Sciatic nerve (tissue), 2 donors: ENCODE measurements at regions of chr2 and their contacts with region 1.

Region 1: DNA sequence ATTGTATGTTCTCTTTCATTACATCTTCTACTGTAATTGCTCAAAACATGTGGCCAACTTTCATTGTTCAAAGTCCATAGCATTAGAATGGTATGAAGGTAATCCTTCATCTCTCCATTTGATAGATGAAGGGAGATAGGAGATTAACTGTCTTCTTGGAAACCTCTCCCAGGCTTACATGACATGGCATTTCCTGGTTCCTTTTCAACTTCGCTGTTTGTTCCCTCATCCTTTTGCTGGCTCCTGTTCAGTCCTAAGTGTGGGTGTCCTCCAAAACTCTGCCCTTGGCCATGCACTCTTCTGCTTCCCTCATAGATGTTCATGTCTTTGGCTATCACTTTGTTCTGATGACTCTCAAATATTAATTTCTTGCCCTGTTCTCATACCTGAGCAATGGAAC is 13.8 kb downstream of the NEB start:
- DNase-seq: no peak
- ATAC-seq: no peak

Region 2: GRCh38 chr2:152047819-152048471 is 327.4 kb after region 1 on chr2:
- intact Hi-C with region 1: no loop called
- DNase-seq: no peak
- ATAC-seq: no peak

Region 3: DNA sequence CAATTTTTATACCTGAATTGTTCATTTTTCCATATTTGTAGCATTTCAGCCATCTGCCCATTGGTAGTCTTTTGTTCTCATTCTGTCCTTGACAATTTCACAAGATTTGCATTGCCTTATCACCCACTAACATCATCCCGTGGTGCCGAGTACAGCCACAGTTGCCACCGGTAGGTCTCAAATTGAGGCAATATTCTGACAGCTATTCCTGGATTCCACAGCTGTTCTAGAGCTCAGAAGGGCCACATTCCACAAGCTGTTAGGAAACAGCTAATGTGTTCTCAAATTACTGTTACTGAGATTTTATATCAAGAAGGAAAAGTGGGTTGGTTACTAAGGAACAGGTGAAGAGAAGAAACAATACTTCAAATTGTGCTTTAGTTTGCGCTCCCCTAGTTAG is 1579.3 kb after region 1 on chr2:
- intact Hi-C with region 1: loop called (anchors 5 kb)
- DNase-seq: no peak
- ATAC-seq: no peak